ENCODE measurements at regions of chr6 and their contacts with region 1.

Region 1: GRCh38 chr6:83884523-83884922 is 25.0 kb downstream of the CYB5R4 start:
- DNase-seq: no peak
- ATAC-seq: no peak
- H3K4me3 ChIP-seq: no peak overlapping the region
- H3K27ac ChIP-seq: no peak overlapping the region
- H3K4me1 ChIP-seq: no peaks in the 10 kb centered on the region
- H3K27me3 ChIP-seq: no peaks in the 10 kb centered on the region

Region 2: GRCh38 chr6:83735461-83735860 is 149.1 kb before region 1 on chr6:
- intact Hi-C with region 1: no loop called
- DNase-seq: no peak
- ATAC-seq: no peak
- H3K4me3 ChIP-seq: no peak overlapping the region
- H3K27ac ChIP-seq: no peak overlapping the region
- H3K4me1 ChIP-seq: no peaks in the 10 kb centered on the region
- H3K27me3 ChIP-seq: no peaks in the 10 kb centered on the region

Region 3: GRCh38 chr6:83948851-83949250 is 64.3 kb after region 1 on chr6:
- intact Hi-C with region 1: no loop called
- DNase-seq: no peak
- ATAC-seq: no peak
- H3K4me3 ChIP-seq: no peak overlapping the region
- H3K27ac ChIP-seq: no peak overlapping the region
- H3K4me1 ChIP-seq: no peaks in the 10 kb centered on the region
- H3K27me3 ChIP-seq: no peaks in the 10 kb centered on the region

Region 4: GRCh38 chr6:84220809-84221409 is 336.4 kb after region 1 on chr6:
- intact Hi-C with region 1: loop called (anchors 2 to 5 kb)
- DNase-seq: no peak
- ATAC-seq: no peak
- H3K4me3 ChIP-seq: no peak overlapping the region
- H3K27ac ChIP-seq: no peak overlapping the region
- H3K4me1 ChIP-seq: no peaks in the 10 kb centered on the region
- H3K27me3 ChIP-seq: no peaks in the 10 kb centered on the region

Region 5: GRCh38 chr6:84428300-84428907 is 543.9 kb after region 1 on chr6:
- intact Hi-C with region 1: no loop called
- DNase-seq: peak; percentile 58 to 89 (median 78)
- ATAC-seq: peak; percentile 29 to 48
- H3K4me3 ChIP-seq: no peak overlapping the region
- H3K27ac ChIP-seq: no peak overlapping the region
- H3K4me1 ChIP-seq: no peaks in the 10 kb centered on the region
- H3K27me3 ChIP-seq: no peaks in the 10 kb centered on the region

Measured in right cardiac atrium (tissue), 5 donors.